Left ventricle myocardium inferior (tissue), 1 donor: ENCODE measurements at regions of chr17 and their contacts with region 1.

Region 1: GRCh38 chr17:51000835-51001638 is 119.6 kb downstream of the SPAG9 start:
- DNase-seq: no peak
- H3K4me3 ChIP-seq: no peak overlapping the region
- H3K27ac ChIP-seq: no peak overlapping the region
- H3K4me1 ChIP-seq: no peaks in the 10 kb centered on the region
- H3K27me3 ChIP-seq: no peaks in the 10 kb centered on the region
- CTCF ChIP-seq: peak; percentile 71

Region 2: GRCh38 chr17:50904521-50905459 is 96.2 kb before region 1 on chr17:
- intact Hi-C with region 1: no loop called
- DNase-seq: peak; percentile 41
- H3K4me3 ChIP-seq: no peak overlapping the region
- H3K27ac ChIP-seq: peak overlapping the region; percentile 91
- H3K4me1 ChIP-seq: peaks cover 47% of the 10 kb centered on the region
- H3K27me3 ChIP-seq: no peaks in the 10 kb centered on the region
- CTCF ChIP-seq: no peak

Region 3: GRCh38 chr17:50931144-50931908 is 69.7 kb before region 1 on chr17:
- intact Hi-C with region 1: no loop called
- DNase-seq: peak; percentile 90
- H3K4me3 ChIP-seq: peak overlapping the region; percentile 66
- H3K27ac ChIP-seq: peak overlapping the region; percentile 98
- H3K4me1 ChIP-seq: peaks cover 39% of the 10 kb centered on the region
- H3K27me3 ChIP-seq: no peaks in the 10 kb centered on the region
- CTCF ChIP-seq: no peak

Region 4: DNA sequence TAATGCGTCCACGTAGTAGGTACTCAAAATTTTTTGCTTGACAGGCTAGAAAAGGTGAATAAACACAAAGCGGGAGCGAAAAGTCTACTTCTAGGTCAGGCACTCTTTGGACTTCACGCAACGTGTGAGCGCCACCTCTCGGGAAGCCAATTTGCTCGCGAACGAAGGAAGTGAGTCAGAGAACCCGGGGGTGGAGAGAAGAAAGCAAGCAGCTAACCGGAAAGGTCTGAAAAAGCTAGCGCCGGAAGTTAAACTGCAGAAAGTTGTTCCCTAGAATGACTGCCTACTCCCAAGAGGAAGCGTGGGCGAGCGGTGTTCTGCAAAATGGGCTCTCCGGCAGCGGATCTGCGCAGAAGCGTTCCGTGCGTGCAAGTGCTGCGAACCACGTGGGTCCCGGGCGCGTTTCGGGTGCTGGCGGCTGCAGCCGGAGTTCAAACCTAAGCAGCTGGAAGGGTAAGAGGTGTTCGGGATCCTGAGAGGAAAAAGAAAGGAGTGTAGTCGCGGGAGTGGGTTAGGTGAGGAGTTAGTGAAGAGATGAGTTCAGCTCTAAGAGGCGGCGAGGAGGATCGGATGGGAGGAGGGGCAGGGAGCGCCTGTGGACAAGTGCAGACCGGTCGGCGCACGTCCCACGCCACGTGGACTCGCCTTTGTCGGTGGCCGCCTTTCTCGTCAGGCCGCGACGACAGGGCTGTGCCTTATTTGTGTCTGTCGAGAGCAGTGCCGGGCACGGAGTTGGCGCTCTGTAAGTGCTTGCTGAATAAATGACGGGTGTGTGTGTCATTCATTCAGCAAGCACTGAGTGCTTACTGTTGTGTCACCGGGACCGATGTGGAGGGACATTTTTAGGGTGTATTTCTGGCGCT is 152.4 kb after region 1 on chr17 and contains the start of gene NME1:
- intact Hi-C with region 1: loop called (anchors 5 kb)
- DNase-seq: peak; percentile 94
- H3K4me3 ChIP-seq: peak within 1 kb of the TSS; percentile 78
- H3K27ac ChIP-seq: peak within 1 kb of the TSS; percentile 90
- H3K4me1 ChIP-seq: peaks cover 24% of the 10 kb centered on the region
- H3K27me3 ChIP-seq: no peaks in the 10 kb centered on the region
- CTCF ChIP-seq: peak; percentile 80
- total RNA-seq, gene NME1: 18.9 TPM